HepG2 (cell line): ENCODE measurements at regions of chr7 and their contacts with region 1.

Region 1: GRCh38 chr7:37901236-37901827 is 15.3 kb downstream of the SFRP4 start:
- DNase-seq: peak; percentile 56
- ATAC-seq: peak; percentile 80
- H3K4me3 ChIP-seq: no peak overlapping the region
- H3K27ac ChIP-seq: no peak overlapping the region
- H3K4me1 ChIP-seq: peaks cover 29% of the 10 kb centered on the region
- H3K27me3 ChIP-seq: no peaks in the 10 kb centered on the region
- CTCF ChIP-seq: peak; percentile 70
- EP300 ChIP-seq: no peak
- POLR2A ChIP-seq: no peak
- RAD21 ChIP-seq: peak; percentile 37; the same call in 1 of the 2 replicates

Region 2: DNA sequence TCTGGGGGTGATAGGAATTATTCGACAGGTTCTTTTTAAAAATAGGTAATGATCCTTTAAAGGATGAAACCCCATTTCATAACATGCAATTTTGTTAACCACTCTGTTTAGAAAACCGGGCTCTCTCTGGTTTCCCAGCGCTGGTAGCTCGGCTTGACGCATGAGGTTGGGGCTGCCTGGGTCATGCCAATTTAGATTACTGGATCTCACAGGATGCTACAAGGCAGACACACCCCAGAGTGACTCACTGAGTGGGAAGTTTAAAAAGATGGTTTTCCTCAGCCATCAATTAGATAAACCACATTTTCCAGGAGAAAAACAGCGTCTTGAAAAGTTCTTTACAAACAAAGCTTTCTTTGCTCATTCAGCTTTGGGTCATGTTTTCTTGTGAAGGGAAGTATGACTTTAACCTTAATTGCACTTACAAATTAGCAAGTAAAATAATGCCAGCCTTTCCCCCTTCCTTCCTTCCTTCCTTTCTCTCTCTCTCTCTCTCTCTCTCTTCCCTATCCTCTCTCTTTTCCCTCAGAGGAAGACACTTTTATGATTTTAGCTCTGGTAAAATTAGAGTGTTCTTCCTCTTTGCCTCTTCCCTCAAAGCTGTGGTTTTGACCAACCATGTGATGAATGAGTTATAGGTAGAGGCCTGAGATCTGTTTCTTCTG is 118.9 kb after region 1 on chr7:
- CTCF ChIA-PET with region 1: no interaction called
- POLR2A ChIA-PET with region 1: no interaction called
- in situ Hi-C with region 1: no loop called
- intact Hi-C with region 1: loop called (anchors 5 kb)
- DNase-seq: no peak
- ATAC-seq: no peak
- H3K4me3 ChIP-seq: no peak overlapping the region
- H3K27ac ChIP-seq: no peak overlapping the region
- H3K4me1 ChIP-seq: no peaks in the 10 kb centered on the region
- H3K27me3 ChIP-seq: no peaks in the 10 kb centered on the region
- CTCF ChIP-seq: no peak
- EP300 ChIP-seq: no peak
- POLR2A ChIP-seq: no peak
- RAD21 ChIP-seq: no peak

Region 3: DNA sequence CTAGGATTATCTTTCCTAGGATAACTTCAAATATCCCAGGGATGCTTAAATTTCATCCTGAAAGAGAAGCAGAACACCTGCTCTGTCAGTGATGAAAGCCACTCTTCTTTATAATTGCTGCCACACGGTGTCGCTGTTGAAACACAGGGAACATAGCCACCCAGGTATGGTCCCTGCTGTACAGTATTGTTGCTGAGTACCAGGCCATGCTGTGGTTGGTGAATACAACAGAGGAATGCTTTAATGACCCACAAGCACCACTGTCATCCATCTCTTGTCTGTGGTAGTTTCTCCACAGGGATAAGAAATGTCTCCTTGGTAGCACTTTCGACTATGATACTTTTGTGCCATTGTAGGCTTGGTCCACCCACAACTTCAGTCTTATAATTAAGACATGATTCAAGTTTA is 206.2 kb after region 1 on chr7:
- CTCF ChIA-PET with region 1: interaction called, 53 read pairs
- POLR2A ChIA-PET with region 1: no interaction called
- in situ Hi-C with region 1: loop called (anchors 10 kb)
- intact Hi-C with region 1: loop called (anchors 1 kb)
- DNase-seq: peak; percentile 55
- ATAC-seq: peak; percentile 95
- H3K4me3 ChIP-seq: no peak overlapping the region
- H3K27ac ChIP-seq: no peak overlapping the region
- H3K4me1 ChIP-seq: no peaks in the 10 kb centered on the region
- H3K27me3 ChIP-seq: no peaks in the 10 kb centered on the region
- CTCF ChIP-seq: peak; percentile 86
- EP300 ChIP-seq: no peak
- POLR2A ChIP-seq: no peak
- RAD21 ChIP-seq: peak; percentile 60

Region 4: GRCh38 chr7:38222481-38223096 is 321.3 kb after region 1 on chr7:
- CTCF ChIA-PET with region 1: interaction called, 13 read pairs
- POLR2A ChIA-PET with region 1: no interaction called
- in situ Hi-C with region 1: loop called (anchors 5 kb)
- intact Hi-C with region 1: loop called (anchors 1 kb)
- DNase-seq: peak; percentile 51
- ATAC-seq: peak; percentile 81
- H3K4me3 ChIP-seq: no peak overlapping the region
- H3K27ac ChIP-seq: no peak overlapping the region
- H3K4me1 ChIP-seq: no peaks in the 10 kb centered on the region
- H3K27me3 ChIP-seq: no peaks in the 10 kb centered on the region
- CTCF ChIP-seq: peak; percentile 81
- EP300 ChIP-seq: no peak
- POLR2A ChIP-seq: no peak
- RAD21 ChIP-seq: peak; percentile 54; the same call in 1 of the 2 replicates

Region 5: DNA sequence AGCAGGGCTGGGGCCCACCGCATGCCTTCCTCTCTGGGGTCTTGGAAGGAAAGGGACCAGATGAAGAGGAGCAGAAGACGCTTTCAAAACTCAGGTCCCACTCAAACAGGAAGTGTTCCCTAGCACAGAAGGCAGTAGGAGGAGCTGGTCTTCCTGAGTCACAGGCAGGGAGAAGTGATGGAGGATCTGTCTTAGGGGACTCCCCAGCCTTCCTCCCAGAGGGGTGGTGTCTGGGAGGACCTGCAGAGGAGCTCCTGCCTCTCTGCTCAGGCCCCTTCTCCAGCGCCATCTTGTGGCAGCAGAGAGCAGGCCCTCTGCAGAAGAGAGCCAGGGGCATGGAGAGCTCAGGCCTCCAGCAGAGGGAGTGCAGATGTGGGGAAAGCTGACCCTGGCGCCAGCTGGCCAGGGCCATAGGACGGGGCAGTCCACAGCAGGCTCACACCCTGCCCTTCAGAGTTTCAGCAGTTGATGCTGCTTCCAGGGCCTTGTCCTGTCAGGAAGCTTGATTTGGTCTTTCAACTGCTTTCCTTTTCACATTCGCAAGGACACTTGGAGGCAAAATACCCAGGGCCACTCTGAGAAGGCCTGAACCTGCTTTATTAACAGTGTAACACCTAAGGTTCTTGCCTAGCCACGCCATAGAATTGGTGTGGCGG is 434.3 kb after region 1 on chr7:
- CTCF ChIA-PET with region 1: interaction called, 5 read pairs
- POLR2A ChIA-PET with region 1: no interaction called
- in situ Hi-C with region 1: loop called (anchors 25 kb)
- intact Hi-C with region 1: loop called (anchors 5 kb)
- DNase-seq: peak; percentile 77
- ATAC-seq: peak; percentile 100
- H3K4me3 ChIP-seq: no peak overlapping the region
- H3K27ac ChIP-seq: no peak overlapping the region
- H3K4me1 ChIP-seq: no peaks in the 10 kb centered on the region
- H3K27me3 ChIP-seq: no peaks in the 10 kb centered on the region
- CTCF ChIP-seq: peak; percentile 97
- EP300 ChIP-seq: 0 out of 4 replicates have a peak, but pooled peaks of 1 of the 2 experiments have one; percentile 20
- POLR2A ChIP-seq: no peak
- RAD21 ChIP-seq: peak; percentile 36; the same call in 1 of the 2 replicates